Dendritic cell treated with granulocyte-macrophage colony-stimulating factor and Interleukin-4, amounts not matched to agents 40 ng/mL and 50 ng/mL, for 4 days (primary cell): ENCODE measurements at regions of chr4 and their contacts with region 1.

Region 1: GRCh38 chr4:38675146-38676121 is 11.4 kb downstream of the KLF3 start:
- H3K4me3 Mint-ChIP-seq: no peak overlapping the region
- H3K27ac Mint-ChIP-seq: peak overlapping the region; percentile 18
- H3K4me1 Mint-ChIP-seq: peaks cover 68% of the 10 kb centered on the region
- H3K27me3 Mint-ChIP-seq: no peaks in the 10 kb centered on the region

Region 2: DNA sequence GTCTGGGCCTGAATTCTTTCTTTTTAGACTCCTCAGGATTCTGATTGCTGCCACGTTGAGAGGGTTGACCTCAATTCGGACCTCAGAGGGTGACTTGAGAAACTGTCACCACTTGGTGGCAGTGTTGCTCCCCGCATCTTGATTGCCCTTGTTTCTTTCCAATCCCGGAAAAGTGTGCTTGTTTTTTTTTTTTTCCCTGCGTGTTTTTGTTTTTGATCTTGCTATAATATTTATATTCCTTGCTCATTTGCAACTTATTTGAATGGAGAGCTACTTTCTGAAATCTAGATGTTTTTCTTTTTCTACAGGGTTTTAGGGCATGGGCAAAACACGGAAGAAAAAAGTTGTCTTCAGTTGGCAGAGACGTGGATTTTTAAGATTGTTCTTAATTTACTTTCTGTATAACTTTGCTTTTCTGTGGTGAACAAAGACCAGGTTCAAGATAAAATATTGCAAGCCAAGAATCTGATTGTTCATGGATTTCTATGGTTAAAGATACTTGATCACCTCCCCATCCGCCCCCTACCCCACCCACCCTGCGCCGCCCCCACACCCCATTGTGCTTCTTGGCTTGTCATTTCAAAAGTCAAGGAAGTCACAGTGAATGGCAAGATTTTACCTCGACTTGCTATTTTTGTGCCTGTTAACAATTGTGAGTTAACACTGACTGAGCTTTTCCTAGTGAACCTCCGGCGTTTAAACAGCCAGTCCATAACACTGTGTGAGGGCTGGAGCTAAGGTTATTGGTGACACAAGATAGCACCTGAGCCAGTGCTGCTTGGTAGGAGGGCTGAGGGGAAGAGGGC is 613.1 kb before region 1 on chr4:
- intact Hi-C with region 1: loop called (anchors 2 kb)
- H3K4me3 Mint-ChIP-seq: peak overlapping the region; percentile 68
- H3K27ac Mint-ChIP-seq: peak overlapping the region; percentile 69
- H3K4me1 Mint-ChIP-seq: peaks cover 28% of the 10 kb centered on the region
- H3K27me3 Mint-ChIP-seq: no peaks in the 10 kb centered on the region

Region 3: DNA sequence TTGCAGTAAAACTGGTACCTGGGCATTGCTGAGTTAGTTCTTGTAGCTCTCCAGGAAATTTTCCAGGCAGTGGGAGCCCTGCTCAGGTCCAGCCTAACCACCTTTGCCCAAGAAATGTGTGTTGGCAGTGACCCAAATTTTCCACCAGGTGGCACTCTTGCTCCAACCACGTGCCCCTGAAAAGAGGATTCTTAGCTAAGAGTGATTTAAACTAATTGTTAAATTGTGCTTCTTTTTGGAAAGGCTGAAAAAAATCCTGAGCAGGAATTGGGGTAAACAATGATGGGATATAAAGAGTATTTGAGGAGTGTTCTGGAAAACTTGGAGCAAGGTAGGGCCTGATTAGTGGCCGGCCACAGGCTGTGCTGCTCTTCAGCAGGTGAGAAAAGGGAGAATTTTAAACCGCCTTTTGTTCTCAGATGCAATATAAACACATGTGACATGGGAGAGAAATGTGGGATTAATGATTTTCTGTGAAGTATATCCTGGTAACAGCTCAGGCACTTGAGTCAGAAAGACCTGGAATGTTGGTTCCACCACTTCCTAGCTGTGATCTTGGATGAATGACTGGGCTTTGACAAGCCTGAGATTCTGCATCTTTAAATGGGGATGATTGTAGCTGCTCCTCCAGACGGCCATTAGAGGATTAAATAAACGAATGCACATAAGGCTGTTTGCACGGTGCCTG is 495.6 kb before region 1 on chr4:
- intact Hi-C with region 1: loop called (anchors 1 kb)
- H3K4me3 Mint-ChIP-seq: no peak overlapping the region
- H3K27ac Mint-ChIP-seq: no peak overlapping the region
- H3K4me1 Mint-ChIP-seq: peaks cover 47% of the 10 kb centered on the region
- H3K27me3 Mint-ChIP-seq: peaks cover 2% of the 10 kb centered on the region

Region 4: GRCh38 chr4:38319456-38320342 is 355.7 kb before region 1 on chr4:
- intact Hi-C with region 1: loop called (anchors 2 kb)
- H3K4me3 Mint-ChIP-seq: peak overlapping the region; percentile 55
- H3K27ac Mint-ChIP-seq: peak overlapping the region; percentile 88
- H3K4me1 Mint-ChIP-seq: peaks cover 59% of the 10 kb centered on the region
- H3K27me3 Mint-ChIP-seq: no peaks in the 10 kb centered on the region

Region 5: GRCh38 chr4:38523524-38524448 is 151.6 kb before region 1 on chr4:
- intact Hi-C with region 1: loop called (anchors 5 kb)
- H3K4me3 Mint-ChIP-seq: peak overlapping the region; percentile 52
- H3K27ac Mint-ChIP-seq: peak overlapping the region; percentile 83
- H3K4me1 Mint-ChIP-seq: peaks cover 72% of the 10 kb centered on the region
- H3K27me3 Mint-ChIP-seq: no peaks in the 10 kb centered on the region

Region 6: DNA sequence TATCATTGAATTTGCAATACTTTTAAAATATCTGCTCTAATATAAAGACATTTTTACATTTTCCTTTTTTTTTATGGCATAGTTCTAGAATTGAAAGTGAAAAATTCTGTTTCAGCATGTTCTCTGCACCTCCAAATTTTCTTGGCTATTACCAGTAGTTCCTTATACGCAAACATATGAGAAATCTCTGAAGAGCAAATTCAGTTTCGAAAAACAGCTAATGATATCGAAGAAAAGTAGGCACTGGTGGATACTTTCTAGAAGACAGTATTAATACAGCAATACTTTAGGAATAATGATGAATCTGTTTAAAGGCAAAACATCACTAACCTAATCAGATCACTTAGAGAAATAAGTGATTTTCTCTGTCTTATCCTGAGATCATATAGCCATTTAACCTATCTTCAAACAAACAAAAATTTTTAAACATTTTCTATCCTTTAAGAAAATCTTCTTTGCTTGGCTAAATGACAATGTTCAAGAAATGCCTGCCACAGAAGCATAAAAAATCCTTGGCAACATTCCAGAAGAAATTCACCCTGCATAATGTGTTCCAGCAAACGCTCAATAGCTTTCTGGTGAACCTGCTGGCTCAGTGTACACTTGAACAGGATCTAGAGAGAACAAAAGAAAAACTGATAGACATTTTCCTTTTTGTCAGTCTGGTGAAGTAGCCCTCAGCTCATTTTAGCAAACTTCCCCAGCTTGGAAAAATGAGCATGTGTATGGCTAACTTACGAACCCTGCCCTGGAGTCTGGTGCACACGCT is 62.6 kb before region 1 on chr4:
- intact Hi-C with region 1: loop called (anchors 10 kb)
- H3K4me3 Mint-ChIP-seq: no peak overlapping the region
- H3K27ac Mint-ChIP-seq: no peak overlapping the region
- H3K4me1 Mint-ChIP-seq: peaks cover 45% of the 10 kb centered on the region
- H3K27me3 Mint-ChIP-seq: no peaks in the 10 kb centered on the region

Region 7: DNA sequence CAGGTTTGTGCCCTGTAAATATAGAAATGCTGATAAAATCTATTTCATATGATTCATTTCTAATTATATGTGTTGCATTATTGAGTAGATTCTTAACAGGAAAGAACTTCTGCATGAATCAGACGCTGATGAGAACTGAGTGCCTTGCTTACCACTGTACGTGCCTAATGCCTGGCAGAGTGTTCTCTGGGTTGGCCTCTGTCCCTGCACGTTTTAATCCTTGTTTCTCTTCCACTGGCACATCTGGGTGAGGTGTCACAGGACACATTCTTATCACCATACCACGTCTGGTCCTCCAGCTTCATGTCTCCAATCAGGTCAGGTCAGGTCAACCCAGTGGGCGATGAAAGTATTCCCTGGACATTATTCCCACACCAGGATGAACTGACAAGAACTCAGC is 42.2 kb after region 1 on chr4:
- intact Hi-C with region 1: no loop called
- H3K4me3 Mint-ChIP-seq: no peak overlapping the region
- H3K27ac Mint-ChIP-seq: no peak overlapping the region
- H3K4me1 Mint-ChIP-seq: no peaks in the 10 kb centered on the region
- H3K27me3 Mint-ChIP-seq: no peaks in the 10 kb centered on the region

Region 8: DNA sequence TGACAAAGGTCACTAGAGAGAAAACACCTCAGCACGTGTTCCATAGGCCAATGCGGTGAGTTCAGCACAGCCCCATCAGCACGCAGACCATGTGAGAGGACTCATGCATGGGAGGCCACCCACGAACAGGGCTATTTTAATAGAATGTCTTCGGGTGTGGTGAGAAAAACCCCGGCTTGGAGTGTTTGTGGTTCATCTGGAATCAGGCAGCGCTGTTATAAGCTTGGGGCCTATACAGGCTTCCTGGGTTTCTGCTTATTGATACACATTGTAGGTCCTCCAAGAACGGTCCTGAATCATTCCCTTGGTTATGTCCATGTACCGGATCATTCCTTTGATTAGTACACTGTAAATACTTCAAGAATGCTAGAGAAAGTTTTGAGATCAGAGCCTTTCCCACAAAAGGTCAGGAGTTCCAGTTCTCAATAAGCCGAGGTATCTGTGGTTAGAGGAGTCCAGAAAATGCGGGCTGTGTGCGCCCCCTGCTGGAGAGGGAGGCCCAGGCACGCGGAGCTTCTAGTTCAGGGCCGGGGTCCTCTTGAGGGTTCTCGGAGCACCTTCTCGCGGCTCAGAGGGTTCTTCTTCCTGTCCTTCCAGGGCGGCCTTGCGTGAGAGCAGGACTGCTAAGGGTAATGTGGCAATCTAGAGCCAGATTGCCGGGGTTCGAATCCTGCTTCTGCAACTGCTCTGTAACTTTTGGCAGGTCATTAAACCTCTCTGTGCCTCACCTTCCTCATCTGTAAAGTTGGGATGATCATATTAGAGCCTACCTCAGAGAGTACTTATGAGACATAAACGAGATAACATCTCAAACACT is 55.6 kb after region 1 on chr4:
- intact Hi-C with region 1: loop called (anchors 5 kb)
- H3K4me3 Mint-ChIP-seq: no peak overlapping the region
- H3K27ac Mint-ChIP-seq: peak overlapping the region; percentile 39
- H3K4me1 Mint-ChIP-seq: peaks cover 42% of the 10 kb centered on the region
- H3K27me3 Mint-ChIP-seq: no peaks in the 10 kb centered on the region

Region 9: DNA sequence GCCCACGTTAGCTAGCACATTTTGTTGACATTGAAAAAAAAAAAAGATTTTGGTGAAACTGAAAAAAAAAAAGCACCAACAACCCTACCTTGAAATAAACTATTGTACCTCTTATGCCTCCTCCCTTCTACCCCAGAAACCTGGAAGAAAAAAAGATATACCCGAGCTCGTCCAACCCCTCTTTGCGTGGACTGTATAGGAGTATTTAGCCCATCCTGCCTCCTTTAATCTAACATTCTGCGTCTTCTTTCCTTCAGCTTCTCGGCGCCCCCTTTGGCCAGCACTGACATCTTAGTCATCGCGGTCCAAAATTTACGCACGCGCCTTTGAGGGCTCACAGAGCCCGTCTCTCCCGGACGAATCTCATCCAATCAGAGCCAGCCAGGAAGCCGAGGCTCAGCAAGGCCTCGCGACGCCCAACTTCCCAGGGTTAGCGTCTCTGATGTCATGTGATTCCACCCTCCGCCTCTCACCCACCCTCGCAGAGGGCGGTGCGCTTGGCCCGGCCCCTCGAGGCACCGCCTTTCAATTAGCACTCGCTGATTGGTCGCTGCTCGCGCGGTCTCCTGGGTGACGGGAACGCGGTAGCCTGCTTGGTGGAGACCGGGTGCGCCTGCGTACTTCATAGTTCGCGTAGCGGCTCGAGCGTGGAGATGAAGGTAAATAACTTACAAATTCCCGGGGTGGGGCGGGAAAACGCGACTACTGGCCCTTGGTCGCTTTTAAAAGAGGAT is 506.6 kb after region 1 on chr4 and contains the start of gene WDR19:
- intact Hi-C with region 1: no loop called
- H3K4me3 Mint-ChIP-seq: no peak within 1 kb of the TSS
- H3K27ac Mint-ChIP-seq: no peak within 1 kb of the TSS
- H3K4me1 Mint-ChIP-seq: peaks cover 8% of the 10 kb centered on the region
- H3K27me3 Mint-ChIP-seq: peaks cover 5% of the 10 kb centered on the region